Activated T-helper 2 cell treated with anti-CD3 and anti-CD28 coated beads, Interferon-gamma antibody, Interleukin-2, Interleukin-4, amounts not matched to agents 10 μg/mL and 5 μg/mL and 100 μg/mL, durations not matched to agents 14 hours and 24 hours and 36 hours (primary cell): ENCODE measurements at regions of chr11 and their contacts with region 1.

Region 1: DNA sequence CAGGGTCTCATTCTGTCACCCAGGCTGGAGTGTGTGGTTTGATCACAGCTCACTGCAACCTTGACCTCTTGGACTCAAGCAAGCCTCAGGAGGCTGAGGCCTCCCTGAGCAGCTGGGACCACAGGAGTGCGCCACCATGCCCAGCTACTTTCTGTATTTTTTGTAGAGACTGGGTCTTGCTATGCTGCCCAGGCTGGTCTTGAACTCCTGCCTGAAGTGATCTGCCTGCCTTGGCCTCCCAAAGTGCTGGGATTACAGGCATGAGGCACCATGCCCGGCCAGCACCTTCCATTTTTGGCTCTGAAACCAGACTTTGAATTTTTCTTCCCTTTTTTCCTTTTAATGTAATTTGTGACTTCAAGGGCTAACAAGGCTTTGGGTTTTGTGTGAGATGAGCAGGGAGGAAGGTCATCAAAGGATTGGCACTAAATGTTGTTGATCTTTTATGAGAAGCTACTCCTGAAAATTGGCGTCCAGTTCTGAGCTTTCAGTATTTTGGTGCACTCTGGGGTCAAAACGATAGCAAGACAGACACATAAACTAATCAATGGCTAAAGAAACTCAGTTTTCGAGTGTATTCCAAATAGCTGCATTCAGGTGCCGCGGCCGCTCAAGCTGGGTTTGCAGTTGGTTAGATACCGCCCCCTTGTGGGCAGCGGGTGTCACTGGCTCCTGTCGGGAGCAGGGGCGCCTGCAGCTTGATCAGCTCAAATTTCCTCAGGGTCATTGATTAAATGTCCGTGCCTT is 51.9 kb upstream of the CLMP start:
- DNase-seq: peak; percentile 71
- H3K4me3 Mint-ChIP-seq: no peak overlapping the region
- H3K27ac Mint-ChIP-seq: no peak overlapping the region
- H3K4me1 Mint-ChIP-seq: peaks cover 6% of the 10 kb centered on the region
- H3K27me3 Mint-ChIP-seq: peaks cover 26% of the 10 kb centered on the region

Region 2: DNA sequence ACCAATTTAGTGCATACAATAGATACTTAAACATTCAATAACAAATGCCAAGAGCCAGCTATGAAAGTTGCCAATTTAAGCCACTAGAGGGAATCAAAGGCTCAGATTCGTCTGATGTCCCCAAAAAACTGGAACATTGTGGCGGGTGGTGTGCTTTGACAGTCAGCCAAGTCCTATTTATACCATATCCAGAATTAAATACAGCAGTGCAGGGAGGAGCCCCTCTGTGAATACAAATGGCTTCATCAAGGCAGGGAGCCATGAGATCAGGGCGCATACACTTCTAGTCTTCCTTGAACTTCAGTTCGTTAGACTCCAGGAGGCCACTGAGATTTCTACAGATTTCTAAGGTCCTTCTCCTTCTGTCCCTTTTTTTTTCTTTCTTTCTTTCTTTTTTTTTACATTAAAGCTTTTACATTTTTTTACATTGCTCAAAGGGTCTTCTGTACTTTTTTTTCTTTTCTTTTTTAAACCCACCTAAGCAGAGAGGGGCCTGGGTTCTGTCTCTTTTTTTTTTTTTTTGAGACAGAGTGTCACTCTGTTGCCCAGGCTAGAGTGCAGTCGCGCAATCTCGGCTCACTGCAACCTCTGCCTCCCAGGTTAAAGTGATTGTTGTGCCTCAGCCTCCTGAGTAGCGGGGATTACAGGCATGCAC is 143.5 kb before region 1 on chr11:
- intact Hi-C with region 1: loop called (anchors 2 kb)
- DNase-seq: no peak
- H3K4me3 Mint-ChIP-seq: no peak overlapping the region
- H3K27ac Mint-ChIP-seq: no peak overlapping the region
- H3K4me1 Mint-ChIP-seq: peaks cover 9% of the 10 kb centered on the region
- H3K27me3 Mint-ChIP-seq: peaks cover 10% of the 10 kb centered on the region

Region 3: DNA sequence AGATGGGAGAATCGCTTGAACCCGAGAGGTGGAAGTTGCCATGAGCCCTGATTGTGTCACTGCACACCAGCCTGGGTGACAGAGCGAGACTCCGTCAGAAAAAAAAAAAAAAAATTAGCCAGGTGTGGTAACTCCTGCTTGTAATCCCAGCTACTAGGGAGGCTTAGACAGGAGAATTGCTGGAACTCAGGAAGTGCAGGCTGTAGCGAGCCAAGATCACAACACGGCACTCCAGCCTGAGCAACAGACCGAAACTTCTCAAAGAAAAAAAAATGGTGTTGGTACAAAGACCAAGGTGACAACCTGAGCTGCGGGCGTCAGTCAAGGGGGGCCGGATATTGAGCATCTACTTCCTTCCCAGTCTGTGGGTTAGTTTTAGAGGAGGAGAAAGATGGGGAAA is 136.6 kb before region 1 on chr11:
- intact Hi-C with region 1: loop called (anchors 1 kb)
- DNase-seq: no peak
- H3K4me3 Mint-ChIP-seq: no peak overlapping the region
- H3K27ac Mint-ChIP-seq: no peak overlapping the region
- H3K4me1 Mint-ChIP-seq: no peaks in the 10 kb centered on the region
- H3K27me3 Mint-ChIP-seq: peaks cover 24% of the 10 kb centered on the region

Region 4: GRCh38 chr11:123166071-123166559 is 80.8 kb before region 1 on chr11:
- intact Hi-C with region 1: loop called (anchors 1 kb)
- DNase-seq: no peak
- H3K4me3 Mint-ChIP-seq: no peak overlapping the region
- H3K27ac Mint-ChIP-seq: no peak overlapping the region
- H3K4me1 Mint-ChIP-seq: no peaks in the 10 kb centered on the region
- H3K27me3 Mint-ChIP-seq: peaks cover 7% of the 10 kb centered on the region

Region 5: GRCh38 chr11:123493349-123494063 is 246.6 kb after region 1 on chr11:
- intact Hi-C with region 1: no loop called
- DNase-seq: no peak
- H3K4me3 Mint-ChIP-seq: no peak overlapping the region
- H3K27ac Mint-ChIP-seq: no peak overlapping the region
- H3K4me1 Mint-ChIP-seq: peaks cover 15% of the 10 kb centered on the region
- H3K27me3 Mint-ChIP-seq: no peaks in the 10 kb centered on the region